Ascending aorta (tissue), 2 donors: ENCODE measurements at regions of chr17 and their contacts with region 1.

Region 1: DNA sequence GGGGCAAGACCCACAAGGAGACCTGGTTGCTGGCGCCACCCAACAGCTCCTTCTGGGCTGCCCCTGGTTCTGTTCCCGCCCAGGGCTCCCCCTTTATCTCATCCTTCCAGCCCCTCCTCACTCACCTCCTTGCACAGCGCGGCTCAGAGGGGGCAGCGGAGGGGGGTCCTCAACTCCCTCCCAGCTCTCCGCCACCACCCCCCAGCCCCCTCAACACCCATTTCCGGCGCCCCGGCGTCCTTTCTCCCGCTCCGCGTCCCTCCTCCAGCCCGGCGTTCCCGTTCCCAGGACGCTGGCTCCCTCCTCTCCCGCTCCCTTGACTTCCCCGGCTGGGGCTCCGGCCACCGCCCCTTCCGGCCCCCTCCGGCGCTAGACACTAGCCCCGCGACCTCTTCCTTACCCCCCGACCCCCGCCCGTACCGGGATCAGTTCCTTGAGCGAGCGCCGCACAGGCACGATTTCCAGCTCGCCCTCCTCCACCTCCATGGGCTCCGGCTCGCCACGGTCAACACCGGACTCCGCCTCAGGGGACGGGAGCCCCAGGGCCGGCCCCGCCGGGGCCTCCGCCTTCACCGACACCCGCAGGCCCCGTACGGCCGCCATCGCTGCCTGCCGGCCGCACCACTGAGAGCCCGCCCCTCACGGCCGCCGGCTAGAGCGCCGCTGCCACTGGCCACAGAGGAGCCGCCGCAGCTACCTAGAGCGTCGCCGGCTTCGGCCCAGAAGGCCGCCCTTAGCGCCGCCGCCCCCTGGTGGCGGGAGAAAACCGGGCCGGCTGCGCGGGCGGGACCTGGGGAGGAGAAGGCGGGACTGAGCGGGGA is at the start of gene NCBP3:
- DNase-seq: peak; percentile 54 to 93
- H3K4me3 ChIP-seq: peak within 1 kb of the TSS; percentile 96 to 99
- H3K27ac ChIP-seq: peak within 1 kb of the TSS; percentile 87 to 92
- H3K4me1 ChIP-seq: peaks cover 0 to 11% of the 10 kb centered on the region in 2 donors
- H3K27me3 ChIP-seq: no peaks in the 10 kb centered on the region
- CTCF ChIP-seq: peak; percentile 96 to 98 (median 97)
- total RNA-seq, gene NCBP3: 3.9 TPM

Region 2: GRCh38 chr17:3738562-3739295 is 107.1 kb before region 1 on chr17:
- intact Hi-C with region 1: loop called (anchors 5 kb)
- DNase-seq: no peak
- H3K4me3 ChIP-seq: no peak overlapping the region
- H3K27ac ChIP-seq: no peak overlapping the region
- H3K4me1 ChIP-seq: no peaks in the 10 kb centered on the region
- H3K27me3 ChIP-seq: no peaks in the 10 kb centered on the region
- CTCF ChIP-seq: no peak

Region 3: GRCh38 chr17:3762922-3763776 is 82.7 kb before region 1 on chr17:
- intact Hi-C with region 1: no loop called
- DNase-seq: no peak
- H3K4me3 ChIP-seq: no peak overlapping the region
- H3K27ac ChIP-seq: no peak overlapping the region
- H3K4me1 ChIP-seq: no peaks in the 10 kb centered on the region
- H3K27me3 ChIP-seq: no peaks in the 10 kb centered on the region
- CTCF ChIP-seq: no peak

Region 4: GRCh38 chr17:3893003-3893719 is 47.3 kb after region 1 on chr17 and contains the start of gene CAMKK1:
- intact Hi-C with region 1: loop called (anchors 5 kb)
- DNase-seq: peak; percentile 54 to 91
- H3K4me3 ChIP-seq: peak within 1 kb of the TSS; percentile 83 to 87
- H3K27ac ChIP-seq: peak within 1 kb of the TSS; percentile 66 to 73
- H3K4me1 ChIP-seq: peaks cover 20 to 52% of the 10 kb centered on the region in 2 donors
- H3K27me3 ChIP-seq: no peaks in the 10 kb centered on the region
- CTCF ChIP-seq: no peak
- total RNA-seq, gene CAMKK1: 3.6 TPM

Region 5: DNA sequence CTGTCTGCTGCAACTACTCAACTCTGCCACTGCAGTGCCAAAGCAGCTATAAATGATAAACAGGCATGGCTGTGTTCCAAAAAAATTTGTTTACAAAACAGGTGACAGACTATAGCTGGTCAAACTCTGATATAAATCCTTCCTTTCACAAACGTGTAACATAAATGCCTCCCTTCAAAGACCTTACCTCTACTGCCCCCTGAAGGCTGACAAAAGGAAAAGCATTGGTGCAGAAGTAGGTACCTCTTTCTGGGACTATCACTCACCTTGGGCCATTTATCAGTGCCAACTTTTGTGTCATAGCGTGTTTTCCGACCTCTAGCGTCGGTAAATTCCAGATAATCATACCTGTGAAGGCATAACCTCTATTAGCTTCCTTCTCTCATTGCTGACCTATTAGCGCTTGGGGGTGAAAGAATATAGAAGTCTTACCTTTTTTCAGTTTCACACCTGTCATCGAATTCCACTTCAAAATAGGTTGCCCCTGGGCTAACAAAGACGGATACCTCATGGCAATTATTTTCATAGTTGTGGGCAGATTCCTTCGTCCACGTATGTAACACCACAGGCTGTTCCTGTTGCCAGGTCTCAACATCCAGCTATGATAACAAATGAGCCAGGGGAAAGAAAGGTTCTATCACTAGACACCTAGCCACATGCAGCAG is 229.1 kb after region 1 on chr17:
- intact Hi-C with region 1: loop called (anchors 5 kb)
- DNase-seq: no peak
- H3K4me3 ChIP-seq: no peak overlapping the region
- H3K27ac ChIP-seq: peak overlapping the region; percentile 45 to 62
- H3K4me1 ChIP-seq: peaks cover 0 to 11% of the 10 kb centered on the region in 2 donors
- H3K27me3 ChIP-seq: no peaks in the 10 kb centered on the region
- CTCF ChIP-seq: peak; percentile 43 to 75 (median 66)